ENCODE measurements at regions of chr14 and their contacts with region 1.

Region 1: DNA sequence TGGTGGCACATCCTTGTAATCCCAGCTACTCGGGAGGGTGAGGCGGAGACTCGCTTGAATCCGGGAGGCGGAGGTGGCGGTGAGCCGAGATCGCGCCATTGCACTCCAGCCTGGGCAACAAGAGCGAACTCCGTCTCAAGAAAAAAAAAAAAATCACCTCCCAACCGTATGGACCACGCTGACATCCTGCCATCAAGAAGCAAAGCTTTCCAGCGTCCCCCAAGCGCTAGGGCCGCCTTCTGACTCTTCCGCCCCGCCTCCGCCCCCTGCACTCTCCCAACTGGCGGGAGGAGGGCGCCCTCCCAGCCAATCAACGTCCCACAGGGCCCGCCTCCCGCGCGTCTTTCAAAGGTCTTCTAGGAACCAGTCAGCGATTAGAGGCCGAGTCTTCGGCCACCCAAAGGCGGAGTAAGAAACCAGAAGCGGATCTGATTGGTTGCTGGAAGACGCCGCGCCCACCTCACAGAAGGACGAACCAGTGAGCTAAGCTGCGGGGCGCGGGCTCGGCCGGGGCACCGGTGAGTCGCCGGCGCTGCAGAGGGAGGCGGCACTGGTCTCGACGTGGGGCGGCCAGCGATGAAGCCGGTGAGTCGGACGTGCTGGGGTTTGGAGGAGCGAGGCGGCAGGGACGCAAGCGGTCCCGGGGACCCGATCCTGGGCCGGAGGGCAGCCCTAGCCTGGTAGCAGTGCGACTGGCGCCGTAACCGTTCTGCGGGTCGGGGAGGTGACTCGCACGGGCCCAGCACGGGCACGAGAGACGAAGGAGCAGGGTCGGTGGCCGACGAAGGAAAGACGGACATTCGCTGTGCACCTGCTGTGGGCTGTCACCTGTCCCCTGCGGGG is at the start of gene CDKN3:
- DNase-seq: peak; percentile 99
- H3K4me3 Mint-ChIP-seq: peak within 1 kb of the TSS; percentile 88
- H3K27ac Mint-ChIP-seq: peak within 1 kb of the TSS; percentile 70
- H3K4me1 Mint-ChIP-seq: peaks cover 17% of the 10 kb centered on the region
- H3K27me3 Mint-ChIP-seq: no peaks in the 10 kb centered on the region
- total RNA-seq, gene CDKN3: 96.2 to 99.2 TPM

Region 2: GRCh38 chr14:54435500-54435981 is 38.8 kb after region 1 on chr14:
- CTCF ChIA-PET with region 1: interaction called, 5 read pairs
- POLR2A ChIA-PET with region 1: interaction called, 5 read pairs
- intact Hi-C with region 1: loop called (anchors 1 kb)
- DNase-seq: peak; percentile 40
- H3K4me3 Mint-ChIP-seq: peak overlapping the region; percentile 61
- H3K27ac Mint-ChIP-seq: peak overlapping the region; percentile 76
- H3K4me1 Mint-ChIP-seq: peaks cover 82% of the 10 kb centered on the region
- H3K27me3 Mint-ChIP-seq: no peaks in the 10 kb centered on the region

Region 3: DNA sequence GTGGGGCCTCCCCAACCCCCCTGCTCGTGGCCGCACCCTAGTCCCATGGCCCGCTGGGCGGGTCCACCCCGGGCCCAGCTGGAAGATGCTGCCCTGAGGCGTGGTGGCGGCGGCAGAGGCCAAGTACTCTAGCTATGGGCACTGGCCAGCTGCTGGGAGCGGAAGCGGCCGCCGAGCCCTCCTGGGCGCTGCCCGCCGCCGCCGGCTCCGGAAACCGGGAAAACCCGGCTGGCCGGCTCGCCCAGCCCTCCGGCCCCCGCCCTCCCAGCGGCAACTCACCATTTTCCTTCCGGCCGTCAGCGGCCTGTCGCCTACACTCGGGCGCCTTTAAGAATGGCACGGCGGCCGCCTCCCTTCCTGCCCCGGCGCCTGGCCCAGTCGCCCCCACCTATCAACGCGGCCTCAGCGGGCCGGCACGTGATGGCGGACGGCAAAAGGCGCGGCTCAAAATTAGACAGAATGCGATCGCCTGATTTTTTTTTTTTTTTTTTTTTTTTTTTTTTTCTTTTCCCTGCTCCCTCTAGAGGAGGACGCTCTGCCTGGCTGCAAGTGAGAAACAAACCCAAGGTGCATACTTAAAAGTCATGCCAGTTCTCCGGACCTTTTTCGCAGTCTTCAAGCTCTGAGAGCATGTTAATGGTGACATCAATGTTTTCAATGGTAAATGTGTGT is 92.1 kb after region 1 on chr14 and contains the start of gene GMFB:
- CTCF ChIA-PET with region 1: interaction called, 6 read pairs
- POLR2A ChIA-PET with region 1: interaction called, 6 read pairs
- intact Hi-C with region 1: loop called (anchors 1 kb)
- DNase-seq: peak; percentile 94
- H3K4me3 Mint-ChIP-seq: peak within 1 kb of the TSS; percentile 89
- H3K27ac Mint-ChIP-seq: peak within 1 kb of the TSS; percentile 90
- H3K4me1 Mint-ChIP-seq: peaks cover 55% of the 10 kb centered on the region
- H3K27me3 Mint-ChIP-seq: no peaks in the 10 kb centered on the region
- total RNA-seq, gene GMFB: 39.0 to 43.6 TPM

Region 4: DNA sequence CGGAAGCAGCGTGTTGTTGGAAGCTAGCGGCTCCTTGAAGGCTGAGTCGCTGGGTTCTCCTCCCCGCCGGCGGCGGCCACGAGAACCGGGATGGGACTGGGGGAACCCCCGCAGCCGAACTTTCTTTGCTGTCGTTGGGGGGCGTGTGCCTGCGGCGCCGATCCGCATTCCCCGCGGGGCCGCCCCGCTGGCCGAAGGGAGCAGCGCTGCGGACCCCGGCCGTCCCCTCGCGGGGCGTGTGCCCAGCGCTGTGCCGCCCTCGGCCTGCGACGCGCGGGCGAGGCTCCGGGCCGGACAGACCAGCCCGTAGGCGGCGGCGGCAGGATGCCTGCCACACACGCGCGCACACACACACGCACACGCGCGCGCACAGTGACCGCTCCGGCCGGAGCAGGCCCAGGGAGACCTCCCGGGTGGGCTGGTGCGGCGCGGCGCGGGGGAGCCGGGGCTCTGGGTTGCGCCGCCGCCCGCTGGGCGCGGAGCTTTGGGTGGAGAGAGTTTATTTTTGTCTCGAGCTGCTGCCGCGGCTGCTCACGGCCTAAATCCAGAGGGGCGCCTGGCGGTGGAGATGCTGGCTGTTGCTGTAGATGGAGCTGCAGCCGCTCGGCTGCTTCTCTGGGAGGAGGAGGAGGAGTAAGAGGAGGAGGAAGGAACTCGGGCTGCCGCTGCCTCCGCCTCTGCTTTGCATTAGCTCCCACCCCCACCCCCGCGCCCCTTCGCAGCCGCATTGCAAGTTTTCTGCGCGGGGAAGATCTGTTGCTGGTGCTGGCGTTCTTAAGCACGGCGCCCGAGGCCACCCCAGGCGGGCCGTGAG is 169.9 kb after region 1 on chr14 and contains the start of gene SAMD4A:
- CTCF ChIA-PET with region 1: no interaction called
- POLR2A ChIA-PET with region 1: no interaction called
- intact Hi-C with region 1: no loop called
- DNase-seq: peak; percentile 72
- H3K4me3 Mint-ChIP-seq: peak within 1 kb of the TSS; percentile 91
- H3K27ac Mint-ChIP-seq: peak within 1 kb of the TSS; percentile 72
- H3K4me1 Mint-ChIP-seq: peaks cover 27% of the 10 kb centered on the region
- H3K27me3 Mint-ChIP-seq: peaks cover 7% of the 10 kb centered on the region
- total RNA-seq, gene SAMD4A: 2.4 to 2.6 TPM

Measured in activated CD4-positive, alpha-beta memory T cell treated with anti-CD3 and anti-CD28 coated beads for 36 hours (primary cell).